Adrenal gland (tissue), 19 donors: ENCODE measurements at regions of chr15 and their contacts with region 1.

Region 1: DNA sequence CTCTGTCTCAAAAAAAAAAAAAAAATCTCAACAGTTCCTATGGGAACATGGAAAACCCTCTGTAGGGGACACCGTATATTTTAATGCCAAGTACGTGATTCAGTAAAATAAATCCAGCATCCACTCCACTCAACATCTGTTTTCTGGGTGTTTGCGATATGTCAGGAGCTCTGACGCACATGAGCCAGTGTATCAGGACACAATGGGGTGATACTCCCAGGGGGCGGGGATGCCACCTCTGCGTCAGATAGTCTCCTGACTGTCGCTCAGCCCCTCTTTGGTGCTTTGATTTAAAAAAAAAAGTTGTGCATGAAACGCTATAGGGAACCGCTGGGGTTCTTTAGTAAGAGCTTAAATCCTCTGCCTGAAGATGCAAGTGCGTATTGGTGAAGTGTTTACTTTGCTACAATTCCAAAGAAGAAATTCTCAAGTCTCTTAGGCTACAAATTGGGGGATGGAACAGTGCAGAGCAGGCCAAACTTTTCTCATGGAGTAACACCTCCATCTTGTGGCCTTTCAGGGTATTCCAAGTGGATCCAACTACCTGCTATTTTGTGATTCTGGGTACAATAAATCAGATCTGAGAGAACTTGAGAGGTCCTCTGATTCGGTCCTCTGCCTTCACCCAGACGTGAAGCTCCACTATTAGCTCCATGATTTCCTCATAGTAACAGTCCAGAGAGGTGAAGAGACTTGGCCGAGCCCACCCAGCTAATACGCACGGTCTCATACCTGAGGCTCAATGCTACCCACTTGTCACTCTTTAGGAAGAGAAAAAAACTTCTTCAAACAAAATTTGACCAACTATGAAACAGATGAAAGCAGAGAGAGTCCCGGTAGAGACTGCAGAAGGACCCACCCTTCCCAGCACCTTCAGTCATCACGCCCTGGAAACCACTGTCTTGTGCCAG is 9.3 kb upstream of the NR2E3 start:
- DNase-seq: peak; percentile 34 to 68 (median 48)
- H3K4me3 ChIP-seq: no peak overlapping the region
- H3K27ac ChIP-seq: no peak overlapping the region
- H3K4me1 ChIP-seq: peaks cover 0 to 2% of the 10 kb centered on the region in 2 donors
- H3K27me3 ChIP-seq: no peaks in the 10 kb centered on the region
- CTCF ChIP-seq: peak; percentile 82 to 94 (median 90)
- POLR2A ChIP-seq: no peak

Region 2: GRCh38 chr15:71743861-71744382 is 57.2 kb before region 1 on chr15:
- intact Hi-C with region 1: loop called (anchors 5 to 10 kb)
- DNase-seq: peak; percentile 50 to 77 (median 67)
- H3K4me3 ChIP-seq: no peak overlapping the region
- H3K27ac ChIP-seq: no peak overlapping the region
- H3K4me1 ChIP-seq: peaks cover 0 to 6% of the 10 kb centered on the region in 2 donors
- H3K27me3 ChIP-seq: no peaks in the 10 kb centered on the region
- CTCF ChIP-seq: peak; percentile 47 to 86 (median 70)
- POLR2A ChIP-seq: no peak